Right lobe of liver (tissue), 6 donors: ENCODE measurements at regions of chr19 and their contacts with region 1.

Region 1: DNA sequence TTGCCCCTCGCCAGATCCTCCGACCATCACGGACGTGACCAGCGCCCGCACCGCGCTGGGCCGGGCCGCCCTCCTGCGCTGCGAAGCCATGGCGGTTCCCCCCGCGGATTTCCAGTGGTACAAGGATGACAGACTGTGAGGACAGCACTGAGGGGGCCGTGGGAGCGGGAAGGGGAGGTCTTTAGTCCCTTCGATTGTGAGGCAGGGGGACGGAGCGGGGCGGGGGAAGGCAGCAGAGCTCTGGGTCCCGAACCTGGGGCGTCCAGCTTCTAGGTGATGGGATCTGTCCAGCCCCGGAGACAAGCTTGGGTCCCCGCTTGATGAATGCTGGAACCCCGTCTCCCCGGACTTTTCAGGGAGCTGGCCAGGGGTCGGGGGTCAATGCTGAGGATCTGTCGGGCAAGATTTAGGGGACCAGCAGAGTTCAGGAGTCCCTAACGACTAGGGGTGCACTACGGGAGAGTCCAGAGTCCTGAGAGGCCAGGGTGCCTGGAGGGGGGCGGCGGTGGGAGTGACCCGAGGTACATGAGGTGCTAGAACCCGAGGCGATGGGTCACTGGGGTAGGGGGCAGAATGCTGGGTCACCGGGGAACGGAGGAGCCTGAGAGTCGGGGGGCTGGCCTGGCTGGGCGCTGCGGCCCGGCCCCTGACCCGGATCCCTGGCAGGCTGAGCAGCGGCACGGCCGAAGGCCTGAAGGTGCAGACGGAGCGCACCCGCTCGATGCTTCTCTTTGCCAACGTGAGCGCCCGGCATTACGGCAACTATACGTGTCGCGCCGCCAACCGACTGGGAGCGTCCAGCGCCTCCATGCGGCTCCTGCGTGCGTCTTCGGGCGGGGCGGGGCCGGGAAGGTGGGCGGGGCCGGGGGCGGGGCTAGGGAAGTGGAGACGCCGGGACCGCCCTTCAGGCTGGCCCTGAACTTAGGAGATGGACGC is 14.6 kb downstream of the VSIG10L start:
- DNase-seq: peak in 1 of 3 donors; percentile 55
- ATAC-seq: peak; percentile 53 to 81 (median 64)
- H3K4me3 ChIP-seq: no peak overlapping the region
- H3K27ac ChIP-seq: no peak overlapping the region
- H3K4me1 ChIP-seq: peaks cover 0 to 7% (median 0%) of the 10 kb centered on the region in 4 donors
- H3K27me3 ChIP-seq: peaks cover 0 to 15% of the 10 kb centered on the region in 2 donors
- CTCF ChIP-seq: peak in 3 of 4 donors; percentile 11 to 20 (median 13)
- POLR2A ChIP-seq: no peak

Region 2: DNA sequence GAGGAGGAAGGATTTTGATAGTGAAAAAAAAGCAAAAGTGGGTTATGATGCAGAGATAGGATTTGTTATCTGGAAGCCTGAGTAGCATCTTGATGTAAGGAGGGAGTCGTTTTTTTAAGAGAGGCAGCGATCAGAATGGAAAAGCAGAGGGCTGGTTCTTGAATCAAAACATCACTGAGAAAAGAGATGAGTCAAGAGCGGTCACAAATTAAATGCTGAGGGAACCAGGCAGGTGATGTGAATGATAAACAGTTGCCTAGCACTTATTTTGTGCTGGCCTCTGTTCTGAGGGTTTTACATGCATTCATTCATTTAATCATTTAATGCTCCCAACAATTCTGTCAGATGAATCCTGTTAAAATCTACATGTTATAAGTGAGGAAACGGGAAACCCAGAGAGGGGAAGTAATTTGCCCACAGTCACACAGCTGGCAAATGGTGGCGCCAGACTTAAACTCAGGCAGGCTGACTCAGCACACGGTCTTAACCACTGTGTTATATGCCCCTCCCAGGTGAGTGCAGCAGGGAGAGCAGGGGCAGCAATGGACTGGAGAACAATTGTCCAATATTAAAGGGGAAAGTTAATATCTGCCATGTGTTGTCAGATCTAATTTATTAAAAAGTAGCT is 55.0 kb before region 1 on chr19:
- intact Hi-C with region 1: no loop called
- DNase-seq: no peak
- ATAC-seq: peak in 3 of 4 donors; percentile 28 to 58 (median 43)
- H3K4me3 ChIP-seq: no peak overlapping the region
- H3K27ac ChIP-seq: no peak overlapping the region
- H3K4me1 ChIP-seq: no peaks in the 10 kb centered on the region
- H3K27me3 ChIP-seq: no peaks in the 10 kb centered on the region
- CTCF ChIP-seq: no peak
- POLR2A ChIP-seq: no peak

Region 3: DNA sequence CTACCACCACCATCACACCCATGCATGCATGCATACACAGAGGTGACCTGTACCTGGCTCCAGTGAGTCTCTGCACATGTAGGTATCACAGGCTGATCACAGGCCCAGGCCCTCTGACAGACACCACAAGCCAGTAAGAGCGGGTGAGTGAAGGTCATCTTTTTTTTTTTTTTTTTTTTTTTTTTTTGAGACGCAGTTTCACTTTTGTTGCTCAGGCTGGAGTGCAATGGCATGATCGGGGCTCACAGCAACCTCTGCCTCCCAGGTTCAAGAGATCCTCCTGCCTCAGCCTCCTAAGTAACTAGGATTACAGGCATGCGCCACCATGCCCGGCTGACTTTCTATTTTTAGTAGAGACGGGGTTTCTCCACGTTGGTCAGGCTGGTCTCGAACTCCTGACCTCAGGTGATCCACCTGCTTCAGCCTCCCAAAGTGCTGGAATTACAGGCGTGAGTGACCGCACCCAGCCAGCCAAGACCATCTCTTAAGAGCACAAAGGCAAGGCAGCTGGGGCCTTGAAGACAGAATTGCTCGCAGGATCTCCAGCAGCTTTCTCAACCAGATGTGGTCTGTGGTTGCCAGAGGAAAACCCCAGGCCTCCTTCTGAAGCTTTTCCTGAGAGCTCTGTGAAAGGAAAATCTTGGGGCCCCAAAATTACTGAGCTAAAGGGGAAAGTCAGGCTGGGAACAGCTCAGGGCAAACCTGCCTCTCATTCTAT is 48.3 kb after region 1 on chr19:
- intact Hi-C with region 1: no loop called
- DNase-seq: peak in 1 of 3 donors; percentile 22
- ATAC-seq: no peak
- H3K4me3 ChIP-seq: no peak overlapping the region
- H3K27ac ChIP-seq: no peak overlapping the region
- H3K4me1 ChIP-seq: no peaks in the 10 kb centered on the region
- H3K27me3 ChIP-seq: no peaks in the 10 kb centered on the region
- CTCF ChIP-seq: no peak
- POLR2A ChIP-seq: no peak

Region 4: DNA sequence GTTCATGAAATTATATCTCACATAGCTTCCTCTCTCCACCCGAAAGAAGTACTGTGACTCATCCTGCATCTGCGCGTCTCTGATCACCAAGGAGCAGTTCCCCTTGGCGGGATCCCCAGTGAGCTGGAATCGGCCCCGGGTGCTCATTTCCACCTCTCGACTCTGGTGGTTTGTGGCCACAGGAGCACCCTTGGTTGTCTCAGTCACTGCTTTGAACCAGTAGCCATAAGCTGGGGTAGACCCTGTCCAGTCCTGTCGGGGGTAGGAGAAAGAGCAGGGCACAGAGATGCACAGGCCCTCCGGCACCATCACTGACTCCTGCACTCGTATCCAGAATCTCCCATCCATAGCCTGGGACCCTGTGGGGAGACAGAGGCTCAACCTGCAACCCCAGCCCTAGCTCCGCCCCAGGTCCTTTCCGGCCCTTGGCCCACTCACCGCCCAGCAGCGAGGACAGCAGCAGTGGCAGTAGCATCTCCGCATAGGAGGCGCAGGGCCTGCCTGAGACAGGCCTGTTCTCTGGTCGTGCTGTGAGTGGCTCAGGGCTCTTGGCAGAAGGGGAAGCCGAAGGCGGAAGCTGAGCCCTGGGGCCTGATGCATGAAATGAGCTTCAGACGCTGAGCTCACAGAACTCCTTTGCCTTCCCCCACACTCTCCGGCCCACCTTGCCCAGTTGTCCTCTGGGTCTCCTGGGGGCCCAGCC is 89.9 kb after region 1 on chr19 and contains the start of gene SIGLEC10:
- intact Hi-C with region 1: loop called in 1 of 2 experiments (anchors 10 kb)
- DNase-seq: peak; percentile 50 to 75 (median 55)
- ATAC-seq: peak; percentile 50 to 70 (median 56)
- H3K4me3 ChIP-seq: peak within 1 kb of the TSS in 1 of 3 donors; percentile 2
- H3K27ac ChIP-seq: peak within 1 kb of the TSS in 1 of 3 donors; percentile 29
- H3K4me1 ChIP-seq: no peaks in the 10 kb centered on the region
- H3K27me3 ChIP-seq: no peaks in the 10 kb centered on the region
- CTCF ChIP-seq: no peak
- POLR2A ChIP-seq: no peak
- total RNA-seq, gene SIGLEC10: 2.0 to 12.4 (median 5.6) TPM